ENCODE measurements at regions of chr10 and their contacts with region 1.

Region 1: GRCh38 chr10:88553116-88553752 is 29.9 kb downstream of the RNLS start:
- DNase-seq: peak in 6 of 10 donors; percentile 6 to 63 (median 36)
- H3K4me3 ChIP-seq: no peak overlapping the region
- H3K27ac ChIP-seq: no peak overlapping the region
- H3K27me3 ChIP-seq: no peaks in the 10 kb centered on the region
- CTCF ChIP-seq: peak; percentile 51 to 89 (median 76)

Region 2: GRCh38 chr10:87850742-87851205 is 702.5 kb before region 1 on chr10:
- intact Hi-C with region 1: loop called in 1 of 2 experiments (anchors 5 kb)
- DNase-seq: peak in 8 of 10 donors; percentile 28 to 75 (median 56)
- H3K4me3 ChIP-seq: no peak overlapping the region
- H3K27ac ChIP-seq: no peak overlapping the region
- H3K27me3 ChIP-seq: no peaks in the 10 kb centered on the region
- CTCF ChIP-seq: peak in 55 of 56 donors; percentile 31 to 81 (median 62)

Region 3: DNA sequence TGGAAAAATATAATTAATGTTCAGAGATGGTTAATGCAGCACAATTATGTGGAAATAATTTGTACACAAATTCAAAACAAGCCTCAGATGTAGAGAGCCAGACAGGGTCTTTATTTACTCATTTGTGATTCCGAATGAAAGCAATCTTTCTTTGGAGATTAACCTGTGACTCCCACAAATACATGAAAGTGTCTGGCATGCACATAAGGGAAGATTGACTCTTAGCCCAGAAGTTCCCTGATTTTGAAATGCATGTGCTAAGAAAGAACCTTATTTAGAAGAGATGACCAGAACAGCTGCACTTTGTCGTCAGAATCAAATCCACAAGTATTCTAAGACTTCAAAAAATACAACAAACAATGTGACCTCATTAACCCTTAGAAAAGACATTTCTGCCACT is 15.2 kb before region 1 on chr10:
- intact Hi-C with region 1: no loop called
- DNase-seq: no peak
- H3K4me3 ChIP-seq: no peak overlapping the region
- H3K27ac ChIP-seq: peak overlapping the region in 1 of 59 donors; percentile 9
- H3K27me3 ChIP-seq: no peaks in the 10 kb centered on the region
- CTCF ChIP-seq: no peak

Measured in dorsolateral prefrontal cortex (tissue), 120 donors.